ENCODE measurements at regions of chr14 and their contacts with region 1.

Region 1: GRCh38 chr14:102046343-102047278 is 40.2 kb downstream of the HSP90AA1 start:
- DNase-seq: peak; percentile 75 to 81
- H3K4me3 ChIP-seq: no peak overlapping the region
- H3K27ac ChIP-seq: no peak overlapping the region
- H3K4me1 ChIP-seq: no peaks in the 10 kb centered on the region
- H3K27me3 ChIP-seq: no peaks in the 10 kb centered on the region
- CTCF ChIP-seq: peak; percentile 75 to 98 (median 80)
- EP300 ChIP-seq: no peak
- POLR2A ChIP-seq: 0 out of 3 replicates have a peak, but pooled peaks of 1 of the 2 experiments have one; percentile 15
- RAD21 ChIP-seq: peak; percentile 80 to 84

Region 2: DNA sequence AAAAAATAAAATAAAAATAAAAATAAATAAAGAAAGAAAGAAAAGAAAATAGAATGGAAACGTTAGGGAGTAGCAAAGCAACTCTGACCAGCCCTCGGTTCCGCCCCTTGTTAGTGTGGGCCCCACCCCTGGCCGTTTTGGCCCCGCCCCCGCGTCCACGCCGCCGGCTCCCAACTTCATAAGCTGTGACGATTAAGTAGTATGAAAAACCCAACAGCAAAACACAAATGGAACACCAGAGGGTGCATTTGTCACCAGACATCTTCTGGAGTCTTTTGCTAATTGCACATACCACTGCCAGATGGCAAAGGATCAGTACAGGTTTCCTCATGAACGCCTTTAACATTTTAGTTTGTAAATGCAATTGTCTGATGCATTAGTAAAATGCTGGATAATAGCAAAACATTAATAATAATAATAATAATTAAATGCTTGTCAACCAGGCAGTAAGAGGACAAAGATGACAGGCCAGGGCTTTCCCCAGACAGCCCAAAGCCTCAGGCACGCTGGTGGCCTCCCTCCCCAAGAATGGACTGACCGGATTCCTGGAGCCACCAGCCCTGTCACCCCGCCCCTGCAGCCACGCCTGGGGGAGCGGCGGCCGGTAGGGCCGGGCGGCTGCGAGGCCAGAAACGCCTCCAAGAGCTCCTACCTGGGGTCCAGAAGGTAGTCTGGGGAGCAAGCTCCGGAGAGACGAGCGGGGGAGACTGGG is 16.6 kb after region 1 on chr14:
- CTCF ChIA-PET with region 1: interaction called, 11 read pairs
- POLR2A ChIA-PET with region 1: interaction called, 3 read pairs
- DNase-seq: peak in 1 of 2 experiments; percentile 85
- H3K4me3 ChIP-seq: peak overlapping the region in 1 of 4 experiments; percentile 17; a peak in 1 of 8 replicates
- H3K27ac ChIP-seq: no peak overlapping the region
- H3K4me1 ChIP-seq: peaks cover 0 to 3% (median 0%) of the 10 kb centered on the region in 4 experiments; a peak in 1 of 7 replicates
- H3K27me3 ChIP-seq: no peaks in the 10 kb centered on the region
- CTCF ChIP-seq: no peak; a peak in 1 of 4 replicates
- EP300 ChIP-seq: no peak
- POLR2A ChIP-seq: no peak
- RAD21 ChIP-seq: peak in 1 of 2 experiments; percentile 18; a peak in 1 of 4 replicates

Region 3: GRCh38 chr14:102077382-102077709 is 30.7 kb after region 1 on chr14:
- CTCF ChIA-PET with region 1: interaction called, 14 read pairs
- POLR2A ChIA-PET with region 1: interaction called, 7 read pairs
- DNase-seq: no peak
- H3K4me3 ChIP-seq: no peak overlapping the region
- H3K27ac ChIP-seq: no peak overlapping the region
- H3K4me1 ChIP-seq: no peaks in the 10 kb centered on the region
- H3K27me3 ChIP-seq: no peaks in the 10 kb centered on the region
- CTCF ChIP-seq: no peak
- EP300 ChIP-seq: no peak
- POLR2A ChIP-seq: no peak
- RAD21 ChIP-seq: no peak

Region 4: DNA sequence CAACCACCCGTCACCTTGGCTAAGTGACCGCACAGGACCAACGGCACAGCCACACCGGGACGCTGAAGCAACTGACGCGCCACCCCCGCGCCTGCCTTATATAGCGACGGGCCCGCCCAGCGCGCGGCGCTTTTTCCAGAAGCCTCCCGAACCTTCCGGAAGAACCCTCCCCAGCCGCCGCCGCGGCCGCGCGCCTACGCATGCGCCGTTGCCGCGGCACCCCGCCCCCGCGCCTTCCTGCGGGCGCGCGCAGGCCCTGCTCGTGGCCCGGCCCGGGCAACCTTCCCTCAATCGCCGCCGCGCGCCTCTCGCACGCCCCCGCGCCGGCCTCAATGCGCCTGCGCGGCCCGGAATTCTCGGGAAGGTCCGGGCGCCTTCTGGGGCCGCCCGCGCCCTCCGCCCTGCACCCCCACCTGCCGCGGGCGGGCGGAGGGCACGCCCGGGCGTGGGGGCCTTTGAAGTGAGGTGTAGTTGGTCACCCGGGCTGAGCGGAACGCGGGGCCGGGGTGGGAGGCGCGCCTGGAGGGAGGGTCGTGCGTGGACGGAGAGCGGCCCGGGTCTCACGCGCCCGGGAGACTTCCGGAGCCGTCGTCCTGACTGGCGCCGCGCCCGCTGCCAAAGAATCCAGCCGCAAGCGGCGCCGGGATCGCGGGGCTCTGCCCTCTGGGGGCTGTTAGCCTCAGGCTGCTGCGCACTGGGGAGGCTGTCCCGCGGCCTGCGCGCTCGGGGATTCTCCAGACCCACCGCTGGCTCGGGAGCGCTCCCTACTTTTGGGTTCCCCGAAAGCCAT is 40.6 kb after region 1 on chr14 and contains the start of gene HSP90AA1:
- CTCF ChIA-PET with region 1: interaction called, 17 read pairs
- POLR2A ChIA-PET with region 1: interaction called, 9 read pairs
- DNase-seq: peak; percentile 73 to 96
- H3K4me3 ChIP-seq: peak within 1 kb of the TSS; percentile 78 to 98 (median 87)
- H3K27ac ChIP-seq: peak within 1 kb of the TSS; percentile 92
- H3K4me1 ChIP-seq: peaks cover 4 to 18% (median 12%) of the 10 kb centered on the region in 4 experiments
- H3K27me3 ChIP-seq: no peaks in the 10 kb centered on the region
- CTCF ChIP-seq: no peak
- EP300 ChIP-seq: no peak
- POLR2A ChIP-seq: peak; percentile 86 to 97; a peak in 2 of 3 replicates
- RAD21 ChIP-seq: no peak
- total RNA-seq, gene HSP90AA1: 846 and 878 TPM in 2 replicates

Region 5: DNA sequence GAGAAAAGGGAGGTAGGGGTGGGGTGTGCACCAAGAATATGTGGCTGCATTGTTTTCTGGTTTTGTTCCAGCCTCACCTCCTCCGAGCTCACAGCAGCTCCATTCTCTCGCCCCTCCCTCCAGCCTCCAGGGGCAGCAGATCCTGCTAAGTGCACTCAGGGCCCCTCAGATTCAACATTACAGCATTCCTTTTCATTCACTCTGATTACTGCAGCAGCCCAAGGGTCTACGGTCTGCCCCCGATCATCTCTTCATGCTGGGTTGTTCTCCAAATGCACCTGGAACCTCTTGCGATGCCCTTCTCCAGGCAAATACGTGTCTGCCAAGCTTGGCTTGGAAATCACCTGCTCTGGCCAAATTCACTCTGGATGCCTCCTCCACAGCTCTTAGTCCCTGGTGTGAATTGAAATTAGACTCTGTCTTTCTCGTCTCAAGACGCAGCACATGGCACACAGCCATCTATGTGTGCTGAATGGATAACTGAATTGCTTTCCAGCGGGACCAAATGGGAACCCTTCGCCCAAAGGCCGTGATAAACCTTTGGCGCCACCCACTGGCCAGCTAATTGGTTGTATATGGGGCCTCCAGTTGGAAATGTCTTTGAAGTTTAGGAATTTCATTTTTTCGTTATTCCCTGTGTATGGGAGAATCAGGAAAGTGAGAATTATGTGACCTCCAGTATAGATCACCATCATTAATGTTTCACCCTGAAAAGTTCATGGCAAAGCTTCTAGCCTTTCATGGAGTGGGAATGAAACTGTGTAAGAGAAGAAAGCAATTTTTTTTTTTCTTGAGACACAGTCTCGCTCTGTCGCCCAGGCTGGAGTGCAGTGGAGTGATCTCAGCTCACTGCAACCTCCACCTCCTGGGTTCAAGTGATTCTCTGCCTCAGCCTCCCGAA is 49.9 kb after region 1 on chr14:
- CTCF ChIA-PET with region 1: interaction called, 74 read pairs
- POLR2A ChIA-PET with region 1: no interaction called
- DNase-seq: peak in 1 of 2 experiments; percentile 88
- H3K4me3 ChIP-seq: no peak overlapping the region
- H3K27ac ChIP-seq: no peak overlapping the region
- H3K4me1 ChIP-seq: peaks cover 0 to 14% (median 9%) of the 10 kb centered on the region in 4 experiments; a peak in 6 of 7 replicates
- H3K27me3 ChIP-seq: no peaks in the 10 kb centered on the region
- CTCF ChIP-seq: peak; percentile 60 to 80 (median 78)
- EP300 ChIP-seq: no peak
- POLR2A ChIP-seq: no peak
- RAD21 ChIP-seq: peak; percentile 85 to 91

Measured in H1 (cell line).